ENCODE measurements at regions of chr6 and their contacts with region 1.

Region 1: DNA sequence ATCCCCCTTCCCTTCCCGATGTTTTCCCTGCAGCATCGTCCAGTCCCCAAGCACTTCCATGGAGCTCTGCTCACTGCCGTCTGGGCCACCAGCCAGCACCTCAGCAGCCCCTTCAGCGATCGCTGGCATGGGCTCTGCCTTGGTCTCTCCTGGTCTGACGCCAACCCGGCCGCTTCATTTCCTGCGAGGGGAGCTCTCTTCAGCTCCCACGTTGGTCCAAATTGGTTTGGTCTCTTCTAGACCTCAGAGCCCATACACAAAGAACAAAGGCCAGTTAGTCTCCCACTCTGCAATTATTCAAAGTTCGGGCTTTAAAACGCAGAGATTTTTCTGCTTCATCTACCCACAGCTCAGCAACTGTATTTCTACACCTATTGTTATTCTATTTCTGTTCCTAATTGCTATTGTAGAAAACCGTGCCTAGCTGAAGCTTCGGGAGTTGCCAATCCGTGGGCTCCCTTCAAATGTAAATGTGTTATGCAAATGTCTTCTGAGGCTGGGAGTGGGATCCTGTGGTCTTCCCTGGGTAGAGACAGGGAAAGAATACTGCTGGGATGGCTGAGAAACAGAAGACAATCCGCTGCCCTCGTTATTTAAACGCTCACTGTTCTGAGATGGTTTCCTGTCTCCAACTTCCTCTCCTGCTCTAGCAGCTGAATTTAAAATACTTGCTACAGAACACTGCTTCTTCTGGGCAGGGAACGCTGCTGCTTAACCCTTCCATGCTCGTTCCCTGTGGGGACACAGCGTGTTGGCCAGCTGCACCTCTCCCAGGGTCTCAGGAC is 154.2 kb upstream of the QKI start:
- DNase-seq: peak; percentile 57 to 90 (median 74)

Region 2: DNA sequence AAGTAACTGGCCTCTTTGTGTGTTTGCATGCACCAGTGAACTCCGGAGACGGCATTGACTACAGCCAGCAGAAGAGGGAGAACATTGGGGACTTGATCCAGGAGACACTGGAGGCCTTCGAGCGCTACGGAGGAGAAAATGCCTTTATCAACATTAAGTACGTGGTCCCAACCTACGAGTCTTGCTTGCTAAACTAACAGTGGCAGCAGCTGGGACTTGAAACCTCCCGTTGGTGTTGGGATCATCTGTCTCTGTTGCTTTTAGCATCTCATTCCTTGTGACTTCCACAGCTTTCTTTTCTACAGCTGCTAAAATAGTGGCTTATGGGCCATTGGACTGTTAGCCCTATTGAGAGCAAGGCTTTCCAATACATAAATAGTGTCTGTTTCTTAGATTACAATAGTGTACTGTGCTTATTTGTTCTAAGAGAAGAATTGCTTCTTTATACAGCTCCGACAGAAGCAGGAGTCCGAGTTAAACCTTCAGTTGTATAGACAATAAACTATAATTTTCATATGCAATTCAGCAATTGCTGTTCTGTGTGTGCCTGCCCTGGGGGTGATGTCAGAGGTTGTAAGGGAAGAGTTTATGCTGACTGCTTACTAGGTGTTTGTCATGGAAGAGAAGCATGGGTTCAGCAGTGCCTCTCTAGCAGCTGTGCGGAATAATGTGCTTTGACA is 54.6 kb after region 1 on chr6:
- intact Hi-C with region 1: loop called (anchors 5 kb)
- DNase-seq: peak in 3 of 10 donors; percentile 24 to 87 (median 59)

Measured in posterior cingulate gyrus (tissue), 11 donors.